Activated CD4-positive, alpha-beta T cell treated with anti-CD3 and anti-CD28 coated beads, Interleukin-2, amount 10 ng/mL, durations not matched to agents 7 days and 5 days (primary cell): ENCODE measurements at regions of chr2 and their contacts with region 1.

Region 1: DNA sequence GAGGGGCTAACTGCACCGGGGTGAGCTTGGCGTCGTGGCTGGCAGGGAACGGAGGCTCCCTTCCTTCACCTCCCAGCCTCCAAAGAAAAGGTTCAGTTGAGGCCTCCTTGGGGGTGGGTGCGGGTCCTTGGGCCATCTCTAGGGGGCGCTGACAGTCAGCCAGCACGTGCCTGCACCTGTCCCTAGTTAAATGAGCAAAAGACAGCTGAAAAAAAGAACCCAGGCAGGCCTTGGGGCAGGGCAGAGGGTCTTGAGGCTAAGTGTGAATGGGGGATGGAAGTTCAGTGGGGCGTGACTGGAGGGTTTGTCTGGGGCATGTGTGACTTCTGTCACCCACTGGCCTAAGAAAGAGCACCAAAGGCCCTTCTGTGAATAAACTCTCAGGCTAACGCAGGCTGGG is 56.4 kb downstream of the ZFP36L2 start:
- DNase-seq: peak; percentile 69
- H3K4me3 Mint-ChIP-seq: peak overlapping the region; percentile 12
- H3K27ac Mint-ChIP-seq: peak overlapping the region; percentile 94
- H3K4me1 Mint-ChIP-seq: peaks cover 81% of the 10 kb centered on the region
- H3K27me3 Mint-ChIP-seq: no peaks in the 10 kb centered on the region

Region 2: GRCh38 chr2:43086451-43087221 is 83.4 kb before region 1 on chr2:
- CTCF ChIA-PET with region 1: no interaction called
- POLR2A ChIA-PET with region 1: no interaction called
- DNase-seq: no peak
- H3K4me3 Mint-ChIP-seq: no peak overlapping the region
- H3K27ac Mint-ChIP-seq: no peak overlapping the region
- H3K4me1 Mint-ChIP-seq: no peaks in the 10 kb centered on the region
- H3K27me3 Mint-ChIP-seq: no peaks in the 10 kb centered on the region

Region 3: GRCh38 chr2:43105586-43106558 is 64.1 kb before region 1 on chr2:
- CTCF ChIA-PET with region 1: no interaction called
- POLR2A ChIA-PET with region 1: no interaction called
- DNase-seq: no peak
- H3K4me3 Mint-ChIP-seq: no peak overlapping the region
- H3K27ac Mint-ChIP-seq: peak overlapping the region; percentile 68
- H3K4me1 Mint-ChIP-seq: peaks cover 4% of the 10 kb centered on the region
- H3K27me3 Mint-ChIP-seq: no peaks in the 10 kb centered on the region

Region 4: DNA sequence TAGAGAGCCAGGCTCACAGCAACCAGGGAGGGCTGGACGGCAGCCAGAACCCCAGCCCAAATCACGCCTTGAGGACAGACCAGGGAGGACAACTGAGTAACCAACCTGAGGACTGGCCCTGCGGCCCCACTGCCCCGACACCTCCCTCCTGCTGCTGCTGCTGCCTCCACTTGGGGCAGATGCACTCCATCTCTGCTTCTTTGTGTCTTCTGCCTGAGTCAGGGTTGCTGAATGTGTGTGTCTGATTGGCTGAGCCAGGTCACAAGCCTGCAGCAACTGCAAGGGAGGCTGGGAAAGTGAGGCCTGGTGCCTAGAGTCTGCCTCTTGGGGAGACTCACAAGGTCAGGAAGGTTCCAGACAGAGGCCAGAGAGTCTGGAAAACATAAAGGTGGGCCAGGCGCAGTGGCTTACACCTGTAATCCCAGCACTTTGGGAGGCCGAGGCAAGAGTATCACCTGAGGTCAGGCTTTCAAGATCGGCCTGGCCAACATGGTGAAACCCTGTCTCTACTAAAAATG is 27.0 kb before region 1 on chr2:
- CTCF ChIA-PET with region 1: interaction called, 10 read pairs
- POLR2A ChIA-PET with region 1: interaction called, 4 read pairs
- DNase-seq: peak; percentile 46
- H3K4me3 Mint-ChIP-seq: peak overlapping the region; percentile 57
- H3K27ac Mint-ChIP-seq: peak overlapping the region; percentile 48
- H3K4me1 Mint-ChIP-seq: peaks cover 69% of the 10 kb centered on the region
- H3K27me3 Mint-ChIP-seq: no peaks in the 10 kb centered on the region

Region 5: DNA sequence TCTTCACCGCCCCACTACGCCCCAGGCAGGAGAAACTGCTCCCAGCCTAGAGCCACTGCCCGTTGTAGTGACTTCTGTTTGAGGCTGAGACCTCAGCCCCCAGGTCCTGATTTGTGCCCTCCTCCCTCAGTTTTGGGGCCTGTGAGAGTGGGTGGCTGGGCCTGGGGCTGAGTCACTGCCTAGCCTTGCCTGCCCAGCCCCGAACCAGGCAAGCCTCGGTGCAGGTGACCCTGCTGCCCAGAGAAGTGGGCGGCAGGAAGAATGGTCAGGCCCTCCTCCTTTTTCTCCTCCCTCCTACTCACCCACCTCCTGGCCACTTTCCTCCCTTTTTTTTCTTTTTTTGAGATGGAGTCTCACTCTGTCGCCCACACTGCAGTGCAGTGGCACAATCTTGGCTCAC is 10.2 kb before region 1 on chr2:
- CTCF ChIA-PET with region 1: interaction called, 15 read pairs
- POLR2A ChIA-PET with region 1: interaction called, 3 read pairs
- DNase-seq: no peak
- H3K4me3 Mint-ChIP-seq: peak overlapping the region; percentile 45
- H3K27ac Mint-ChIP-seq: peak overlapping the region; percentile 97
- H3K4me1 Mint-ChIP-seq: peaks cover 73% of the 10 kb centered on the region
- H3K27me3 Mint-ChIP-seq: no peaks in the 10 kb centered on the region

Region 6: DNA sequence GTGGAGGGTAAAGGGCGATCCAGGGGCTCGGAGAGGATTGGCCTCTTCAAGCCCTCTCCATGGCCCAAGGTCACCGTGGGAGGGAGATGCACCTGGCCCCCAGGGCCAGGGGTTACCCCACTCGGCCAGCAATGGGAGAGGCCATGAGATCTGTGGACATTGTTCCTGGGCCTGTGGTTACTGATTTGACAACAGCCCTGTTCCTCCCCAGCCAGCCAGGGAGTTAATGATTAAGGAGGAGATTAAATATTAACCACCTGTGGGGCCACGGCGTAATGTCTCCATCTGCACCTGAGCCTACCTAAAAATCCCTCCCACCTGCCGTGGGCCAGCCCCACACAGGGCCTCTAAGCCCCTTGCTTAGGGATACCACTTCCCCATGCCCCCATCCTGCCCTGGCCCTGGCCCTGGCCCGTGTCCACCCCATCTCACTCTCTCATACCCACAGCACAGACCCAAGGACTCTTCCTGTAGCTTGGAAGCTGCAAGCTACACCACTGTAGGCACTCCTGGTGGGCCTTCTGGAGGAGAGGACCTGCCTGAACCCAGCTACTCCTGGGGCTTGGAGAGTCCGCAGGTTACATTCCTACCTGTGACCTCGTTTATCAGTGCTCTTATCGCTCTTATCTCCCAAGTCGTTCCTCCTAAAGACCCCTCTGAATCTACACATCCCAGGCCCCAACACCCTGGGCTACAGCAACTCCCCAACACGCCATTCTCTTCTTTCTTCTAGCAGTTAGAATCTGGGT is 24.3 kb after region 1 on chr2:
- CTCF ChIA-PET with region 1: interaction called, 12 read pairs
- POLR2A ChIA-PET with region 1: no interaction called
- DNase-seq: no peak
- H3K4me3 Mint-ChIP-seq: peak overlapping the region; percentile 90
- H3K27ac Mint-ChIP-seq: peak overlapping the region; percentile 96
- H3K4me1 Mint-ChIP-seq: peaks cover 59% of the 10 kb centered on the region
- H3K27me3 Mint-ChIP-seq: no peaks in the 10 kb centered on the region

Region 7: DNA sequence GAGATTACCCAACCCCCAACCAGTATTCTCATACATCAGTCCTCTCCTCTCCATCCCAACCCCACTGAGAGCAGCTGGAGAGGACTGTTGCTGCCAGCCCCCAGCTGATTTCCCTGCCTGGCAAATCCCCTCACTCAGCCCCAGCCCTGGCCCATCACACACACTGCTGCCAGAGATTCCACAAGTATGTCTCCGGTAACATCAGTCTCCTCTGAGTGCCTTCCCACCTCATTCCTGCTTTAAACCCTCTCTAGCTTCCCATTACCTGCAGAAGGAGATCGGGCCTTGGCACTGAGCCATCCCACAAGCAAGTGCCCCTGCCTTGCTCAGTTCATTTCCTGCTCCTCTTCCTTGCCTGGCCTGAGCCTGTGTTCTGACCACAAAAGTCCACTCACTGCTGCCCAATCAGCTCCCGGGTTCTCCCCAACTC is 107.0 kb after region 1 on chr2:
- CTCF ChIA-PET with region 1: no interaction called
- POLR2A ChIA-PET with region 1: no interaction called
- DNase-seq: no peak
- H3K4me3 Mint-ChIP-seq: no peak overlapping the region
- H3K27ac Mint-ChIP-seq: no peak overlapping the region
- H3K4me1 Mint-ChIP-seq: peaks cover 6% of the 10 kb centered on the region
- H3K27me3 Mint-ChIP-seq: no peaks in the 10 kb centered on the region